Left ventricle myocardium superior (tissue), 1 donor: ENCODE measurements at regions of chr6 and their contacts with region 1.

Region 1: DNA sequence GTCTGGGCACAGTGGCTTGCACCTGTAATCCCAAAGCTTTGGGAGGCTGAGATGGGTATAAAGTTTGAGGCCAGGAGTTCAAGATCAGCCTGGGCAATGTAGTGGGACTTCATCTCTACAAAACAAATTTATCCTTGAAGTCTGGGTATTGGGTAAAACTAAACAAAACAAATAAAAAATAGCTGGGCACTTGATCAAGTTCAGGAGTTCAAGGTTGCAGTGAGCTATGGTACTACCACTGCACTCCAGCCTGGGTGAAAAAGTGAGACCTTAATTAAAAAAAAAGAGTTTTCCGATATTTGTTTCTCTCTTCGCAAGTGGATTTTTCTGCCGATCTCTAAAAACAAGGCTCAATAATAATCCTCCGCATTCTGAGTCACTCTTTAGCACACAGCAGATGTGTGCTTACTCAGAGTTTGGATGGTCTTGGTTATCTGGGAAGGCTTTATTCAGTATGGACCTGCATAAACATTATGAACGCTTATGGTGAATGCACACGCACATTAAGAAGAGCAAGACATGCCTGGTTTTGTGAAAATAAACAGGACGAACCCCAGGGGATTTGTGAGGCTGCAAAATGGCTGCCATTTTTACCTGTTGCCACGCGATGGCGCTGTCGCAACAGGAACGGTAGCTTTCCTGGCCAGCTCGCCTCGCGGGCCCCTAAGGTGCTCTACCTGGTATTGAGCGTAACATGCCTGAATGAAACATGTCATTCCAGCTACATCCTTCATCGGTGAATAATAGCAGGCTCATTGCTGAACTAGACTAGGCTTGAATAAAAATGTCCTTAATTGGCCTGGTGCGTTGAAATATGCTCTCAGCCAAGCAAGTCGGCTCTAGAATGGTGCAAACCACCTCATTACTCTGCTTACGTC is 6.0 kb downstream of the OPN5 start:
- DNase-seq: peak; percentile 63
- ATAC-seq: peak; percentile 68

Region 2: GRCh38 chr6:48123601-48124000 is 335.7 kb after region 1 on chr6:
- intact Hi-C with region 1: no loop called
- DNase-seq: no peak
- ATAC-seq: no peak

Region 3: DNA sequence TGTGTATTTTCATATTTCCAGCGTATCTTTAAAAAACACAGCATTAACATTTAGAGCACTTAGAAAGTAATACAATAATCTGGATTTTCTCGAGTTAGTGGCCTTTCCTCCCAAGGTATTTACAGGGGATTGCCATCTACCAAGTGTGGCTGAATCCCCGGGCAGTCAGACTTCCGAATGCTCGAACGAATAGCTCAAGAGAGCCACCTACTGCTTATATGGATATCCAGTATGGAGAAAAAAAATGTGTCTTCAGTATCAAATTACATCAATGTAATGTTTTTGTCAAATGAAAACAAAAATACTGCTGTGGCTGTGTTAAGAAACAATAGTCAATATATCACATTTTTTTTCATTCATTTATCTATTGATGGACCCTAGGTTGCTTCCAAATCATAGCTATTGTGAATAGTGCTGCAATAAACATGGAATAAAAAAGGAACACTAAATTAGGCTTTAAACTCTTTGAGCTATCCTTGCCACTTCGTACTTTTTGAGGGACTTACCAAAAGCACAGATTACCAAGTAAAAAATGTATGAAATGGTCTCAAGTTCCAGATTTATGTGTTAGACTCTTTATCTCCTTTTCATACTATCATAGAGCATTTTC is 977.6 kb after region 1 on chr6:
- intact Hi-C with region 1: loop called (anchors 2 kb)
- DNase-seq: no peak
- ATAC-seq: no peak

Region 4: GRCh38 chr6:49409951-49410542 is 1622.2 kb after region 1 on chr6:
- intact Hi-C with region 1: loop called (anchors 5 kb)
- DNase-seq: peak; percentile 39
- ATAC-seq: peak; percentile 45